ENCODE measurements at regions of chr1 and their contacts with region 1.

Region 1: GRCh38 chr1:110412576-110412975 is 5.1 kb upstream of the LAMTOR5 start:
- DNase-seq: peak; percentile 75
- ATAC-seq: peak; percentile 83
- H3K4me3 ChIP-seq: no peak overlapping the region
- H3K27ac ChIP-seq: no peak overlapping the region
- H3K4me1 ChIP-seq: peaks cover 13% of the 10 kb centered on the region
- H3K27me3 ChIP-seq: no peaks in the 10 kb centered on the region
- CTCF ChIP-seq: peak; percentile 83

Region 2: GRCh38 chr1:110460253-110461220 is 48.0 kb after region 1 on chr1:
- intact Hi-C with region 1: loop called (anchors 5 kb)
- DNase-seq: no peak
- ATAC-seq: peak; percentile 71 to 87
- H3K4me3 ChIP-seq: no peak overlapping the region
- H3K27ac ChIP-seq: no peak overlapping the region
- H3K4me1 ChIP-seq: peaks cover 5% of the 10 kb centered on the region
- H3K27me3 ChIP-seq: no peaks in the 10 kb centered on the region
- CTCF ChIP-seq: peak; percentile 96